ENCODE measurements at regions of chr6 and their contacts with region 1.

Region 1: DNA sequence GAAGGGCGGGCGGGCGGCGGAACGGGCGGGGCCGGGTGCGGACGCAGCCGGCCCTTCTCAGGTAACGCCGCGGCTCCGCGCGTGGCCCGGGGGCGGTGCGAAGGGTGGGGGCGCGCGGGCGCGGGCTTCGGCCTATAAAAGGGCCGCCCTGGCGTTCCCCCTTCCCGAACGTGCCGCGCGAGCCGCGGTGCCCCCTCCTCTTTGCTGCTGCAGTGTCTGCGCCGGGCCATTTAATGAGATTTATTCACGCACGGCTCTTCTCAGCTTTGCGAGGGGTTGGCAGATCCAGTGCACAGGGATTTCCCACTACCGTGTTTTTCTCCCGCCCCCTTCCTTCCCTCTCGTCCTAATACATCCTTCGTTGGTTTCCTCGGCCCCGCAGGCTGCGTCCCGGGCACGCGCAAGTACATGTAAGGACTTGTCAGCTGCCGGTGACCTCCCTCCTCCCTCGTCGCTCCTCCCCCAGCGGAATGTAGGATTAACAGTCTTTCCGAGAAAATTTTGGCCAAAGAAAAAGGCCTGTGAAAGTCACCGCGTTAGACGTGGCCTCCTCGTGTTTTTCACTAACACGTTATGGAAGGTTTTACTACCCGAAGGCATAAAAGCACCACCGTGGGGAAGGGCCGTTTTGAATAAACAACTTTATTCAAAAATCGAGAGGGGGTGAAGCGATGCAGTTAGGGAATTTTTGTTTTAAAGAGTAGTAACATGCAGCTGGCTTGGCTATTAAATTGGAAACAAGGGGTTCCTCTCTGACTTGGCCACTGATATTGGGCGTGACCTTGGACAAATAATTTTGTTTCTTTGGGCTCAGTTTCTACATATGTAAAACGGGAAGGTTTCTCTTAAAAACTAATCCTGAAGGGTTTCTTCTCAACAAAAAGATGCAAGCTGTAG is 966 bp upstream of the REV3L start:
- DNase-seq: peak; percentile 95

Region 2: DNA sequence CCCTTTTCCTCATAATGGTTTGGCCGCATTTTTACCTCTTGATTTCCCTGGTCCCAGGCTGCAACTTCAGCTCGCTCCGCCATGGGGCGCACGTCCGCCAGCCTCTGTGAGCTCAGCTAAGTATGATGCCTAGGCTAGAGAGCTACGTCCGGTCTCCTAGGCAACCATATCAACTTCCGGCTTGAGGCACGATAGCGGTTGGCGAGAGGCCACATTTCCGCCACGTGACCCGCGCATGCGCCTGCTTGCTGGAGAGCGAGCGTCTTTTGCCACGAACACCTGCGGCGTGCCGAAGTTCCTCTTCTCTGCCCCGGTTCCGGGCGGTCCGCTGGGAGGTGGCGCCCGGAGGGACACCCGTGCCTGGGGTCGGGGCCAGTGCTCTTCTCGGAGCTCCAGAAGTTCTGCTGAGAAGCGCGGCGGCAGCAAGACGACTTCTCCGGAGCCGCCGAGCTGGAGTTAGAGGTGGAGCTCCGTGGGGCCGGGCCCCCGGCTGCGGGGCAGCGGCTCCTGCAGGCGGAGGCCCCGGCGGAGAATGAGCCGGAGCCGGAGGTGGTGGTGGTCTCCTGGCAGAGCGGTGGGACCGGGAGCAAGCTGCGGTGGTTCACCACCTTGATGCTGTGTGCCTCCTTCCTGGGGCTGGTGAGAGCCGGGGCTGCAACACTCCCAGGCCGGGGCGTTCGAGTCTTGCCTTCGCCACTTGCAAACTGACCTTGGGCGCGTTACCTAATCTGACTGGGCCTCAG is 224.7 kb before region 1 on chr6:
- intact Hi-C with region 1: loop called (anchors 5 kb)
- DNase-seq: peak; percentile 99

Region 3: GRCh38 chr6:111534231-111534751 is 50.3 kb after region 1 on chr6:
- intact Hi-C with region 1: loop called (anchors 5 kb)
- DNase-seq: no peak

Region 4: DNA sequence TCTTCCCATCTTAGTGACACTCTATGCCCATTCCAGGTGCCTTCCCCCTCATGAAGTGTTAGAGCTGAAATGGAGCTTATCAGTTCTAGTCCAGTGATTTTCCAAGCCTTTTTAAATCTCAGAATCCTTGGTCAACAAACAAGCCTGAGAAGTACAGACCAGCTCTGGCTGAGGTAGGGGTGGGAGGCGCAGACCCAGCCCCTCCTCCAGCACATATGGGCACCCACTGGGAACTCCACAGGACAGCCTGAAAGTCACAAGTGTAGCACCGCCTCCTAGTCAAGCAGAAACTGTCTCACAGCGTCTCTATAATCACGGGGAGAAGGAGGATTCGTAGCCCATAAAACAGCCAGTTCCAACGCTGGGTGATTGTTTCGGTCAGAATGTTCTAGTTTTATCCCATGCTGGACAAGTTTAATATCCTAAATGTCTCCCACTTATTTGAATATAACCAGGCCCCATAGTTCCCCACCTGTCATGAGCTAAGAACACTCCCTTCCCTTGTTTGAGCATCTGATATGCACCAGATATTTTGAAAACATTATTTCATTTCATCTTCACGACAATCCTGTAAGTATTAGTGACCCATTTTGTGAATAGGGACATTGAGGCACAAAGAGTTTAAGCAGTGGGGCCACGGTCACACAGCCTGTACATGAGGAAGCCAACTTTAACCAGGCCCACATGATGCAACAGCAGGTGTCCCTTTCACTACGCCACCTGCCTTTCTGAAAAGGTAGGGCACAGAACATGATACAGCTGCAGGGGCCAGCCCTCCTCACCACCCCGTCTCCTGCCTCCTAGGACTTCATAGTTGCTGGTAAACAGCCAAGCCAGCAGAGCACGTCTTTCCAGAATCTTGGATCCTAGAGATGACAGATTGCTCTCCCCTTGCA is 81.6 kb after region 1 on chr6:
- intact Hi-C with region 1: loop called (anchors 5 kb)
- DNase-seq: no peak

Region 5: GRCh38 chr6:111625461-111626391 is 141.7 kb after region 1 on chr6:
- intact Hi-C with region 1: loop called (anchors 5 kb)
- DNase-seq: no peak

Region 6: GRCh38 chr6:112043032-112044007 is 559.3 kb after region 1 on chr6:
- intact Hi-C with region 1: loop called (anchors 10 kb)
- DNase-seq: peak; percentile 93